ENCODE measurements at regions of chr10 and their contacts with region 1.

Region 1: DNA sequence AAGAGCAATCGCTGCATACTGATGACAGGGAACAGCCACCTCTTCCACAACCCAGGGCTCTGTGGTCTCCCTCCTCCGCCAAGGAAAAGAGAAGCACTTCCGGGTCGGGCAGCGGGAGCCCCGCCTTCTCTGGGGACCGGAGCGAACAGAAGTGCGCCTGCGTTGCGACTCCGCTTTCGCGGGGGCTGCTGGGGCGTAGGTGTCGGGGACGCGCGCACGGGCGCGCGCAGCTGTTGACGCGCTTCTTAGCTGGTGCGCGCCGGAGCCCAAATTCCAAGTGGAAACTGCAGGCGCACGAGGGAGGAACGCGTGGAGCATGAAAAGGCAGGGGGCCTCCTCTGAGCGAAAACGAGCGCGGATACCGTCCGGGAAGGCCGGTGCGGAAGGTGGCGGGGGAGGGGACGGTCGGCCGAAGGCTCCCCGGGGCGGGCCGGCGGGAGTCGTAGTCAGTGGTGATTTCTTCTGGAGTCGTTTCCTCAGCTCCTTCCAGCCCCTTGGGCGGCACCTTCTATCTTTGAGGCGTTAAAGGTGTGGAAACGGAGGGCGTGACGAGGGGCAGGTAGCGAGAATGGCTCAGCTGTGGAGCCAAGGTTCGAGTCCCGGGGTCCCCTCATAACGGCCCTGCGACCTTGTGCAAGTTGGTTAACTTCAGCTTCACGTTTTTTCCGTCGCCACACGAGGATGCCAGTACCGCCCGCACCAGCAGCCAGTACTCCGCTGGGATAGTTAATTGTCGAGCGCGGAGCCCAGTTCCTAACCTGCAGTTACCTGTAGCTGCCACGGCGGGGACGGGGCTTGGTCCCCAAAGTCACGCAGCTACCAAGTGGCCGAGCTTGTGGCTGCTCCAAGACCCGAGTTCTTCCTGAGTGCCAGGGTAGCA is at the starts of genes COX15 and CUTC:
- DNase-seq: peak; percentile 96
- H3K4me3 Mint-ChIP-seq: peak within 1 kb of the TSS; percentile 99
- H3K27ac Mint-ChIP-seq: peak within 1 kb of the TSS; percentile 96
- H3K4me1 Mint-ChIP-seq: peaks cover 32% of the 10 kb centered on the region
- H3K27me3 Mint-ChIP-seq: no peaks in the 10 kb centered on the region
- total RNA-seq, gene COX15: 36.3 to 38.8 TPM
- total RNA-seq, gene CUTC: 21.6 to 21.9 TPM

Region 2: DNA sequence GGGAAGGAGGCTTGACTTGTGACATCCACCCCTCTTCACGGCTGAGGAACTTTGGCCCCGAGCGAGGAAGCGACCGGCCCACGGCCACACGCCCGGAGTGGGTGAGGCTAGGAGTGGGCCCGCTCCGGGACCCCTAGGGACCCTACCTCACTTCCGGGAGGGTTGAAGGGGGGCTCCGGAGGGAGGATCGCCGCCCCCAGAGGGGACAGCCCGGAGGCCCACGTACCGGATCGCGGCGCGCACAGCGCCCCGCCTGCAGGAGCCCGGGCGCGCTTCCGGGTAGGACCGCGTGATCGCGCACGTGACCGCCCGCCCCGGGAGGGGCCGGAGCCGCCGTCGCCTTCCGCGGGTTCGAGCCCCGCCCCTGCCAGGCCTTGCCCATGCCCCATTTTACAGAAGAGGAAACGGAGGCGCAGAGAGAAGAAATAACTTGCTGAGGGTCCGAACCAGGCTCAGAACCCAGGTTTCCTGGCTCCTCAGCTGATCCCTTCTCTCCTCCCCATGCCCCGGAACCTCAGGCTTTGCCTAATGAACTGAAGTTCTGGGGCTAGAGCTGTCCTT is 1285.5 kb before region 1 on chr10 and contains the start of gene HPS1:
- CTCF ChIA-PET with region 1: no interaction called
- intact Hi-C with region 1: loop called (anchors 5 kb)
- DNase-seq: peak; percentile 86
- H3K4me3 Mint-ChIP-seq: peak within 1 kb of the TSS; percentile 88
- H3K27ac Mint-ChIP-seq: peak within 1 kb of the TSS; percentile 84
- H3K4me1 Mint-ChIP-seq: peaks cover 40% of the 10 kb centered on the region
- H3K27me3 Mint-ChIP-seq: peaks cover 3% of the 10 kb centered on the region
- total RNA-seq, gene HPS1: 28.1 to 31.0 TPM

Region 3: GRCh38 chr10:99430451-99431189 is 301.7 kb before region 1 on chr10 and contains the start of gene GOT1:
- CTCF ChIA-PET with region 1: interaction called, 3 read pairs
- intact Hi-C with region 1: loop called (anchors 1 kb)
- DNase-seq: peak; percentile 99
- H3K4me3 Mint-ChIP-seq: peak within 1 kb of the TSS; percentile 95
- H3K27ac Mint-ChIP-seq: peak within 1 kb of the TSS; percentile 90
- H3K4me1 Mint-ChIP-seq: peaks cover 38% of the 10 kb centered on the region
- H3K27me3 Mint-ChIP-seq: no peaks in the 10 kb centered on the region
- total RNA-seq, gene GOT1: 62.6 to 67.3 TPM